ENCODE measurements at regions of chr4 and their contacts with region 1.

Region 1: GRCh38 chr4:24770032-24770584 is 25.3 kb upstream of the SOD3 start:
- DNase-seq: no peak
- H3K4me3 ChIP-seq: no peak overlapping the region
- H3K27ac ChIP-seq: no peak overlapping the region
- H3K27me3 ChIP-seq: no peaks in the 10 kb centered on the region
- CTCF ChIP-seq: no peak

Region 2: GRCh38 chr4:24730256-24731001 is 39.7 kb before region 1 on chr4:
- intact Hi-C with region 1: loop called in 1 of 2 experiments (anchors 5 kb)
- DNase-seq: peak; percentile 36 to 89 (median 74)
- H3K4me3 ChIP-seq: no peak overlapping the region
- H3K27ac ChIP-seq: peak overlapping the region in 47 of 59 donors; percentile 14 to 84 (median 64)
- H3K27me3 ChIP-seq: no peaks in the 10 kb centered on the region
- CTCF ChIP-seq: no peak

Region 3: DNA sequence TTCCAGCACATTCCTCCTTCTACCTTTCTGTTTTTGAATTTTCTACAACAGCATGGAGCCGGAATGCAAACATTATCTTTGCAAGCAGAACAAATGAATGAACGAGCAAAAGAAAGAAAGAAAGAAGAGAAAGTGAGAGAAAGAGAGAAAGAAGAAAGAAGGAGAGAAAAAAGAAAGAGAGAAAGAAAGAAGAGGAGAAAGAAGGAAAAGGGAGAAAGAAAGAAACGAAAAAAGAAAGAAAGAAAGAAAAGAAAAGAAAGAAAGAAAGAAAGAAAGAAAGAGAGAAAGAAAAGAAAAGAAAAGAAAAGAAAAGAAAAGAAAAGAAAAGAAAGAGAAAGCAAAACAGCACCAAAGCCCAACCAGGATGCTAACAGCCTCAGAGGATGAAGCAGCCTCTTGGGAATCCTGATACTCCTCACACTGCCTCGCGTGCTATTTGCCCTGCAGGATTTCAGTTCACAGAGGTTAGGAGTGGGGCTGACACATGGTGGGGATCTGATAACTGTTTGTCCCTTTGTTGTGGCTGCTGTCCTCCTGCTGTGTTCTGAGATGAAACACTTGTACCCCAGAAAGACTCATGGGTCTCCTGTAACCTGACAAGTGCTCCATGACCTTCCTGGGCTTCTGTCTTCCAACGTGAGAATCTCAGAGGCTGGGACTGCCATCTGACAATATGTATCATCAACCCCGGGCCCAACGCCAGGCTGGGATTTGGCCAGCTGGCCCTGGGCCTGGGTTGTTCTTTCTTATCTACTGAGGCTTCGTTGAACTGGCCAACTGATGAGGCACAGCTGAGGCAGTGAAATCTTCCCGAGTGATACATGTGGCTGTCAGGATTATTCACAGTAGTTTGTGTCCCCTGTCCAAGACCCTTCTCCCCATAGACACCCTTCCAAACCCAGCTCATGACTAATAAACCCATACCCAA is 329.1 kb after region 1 on chr4:
- intact Hi-C with region 1: no loop called
- DNase-seq: peak in 1 of 10 donors; percentile 20
- H3K4me3 ChIP-seq: no peak overlapping the region
- H3K27ac ChIP-seq: no peak overlapping the region
- H3K27me3 ChIP-seq: no peaks in the 10 kb centered on the region
- CTCF ChIP-seq: no peak

Measured in dorsolateral prefrontal cortex (tissue), 120 donors.